ENCODE measurements at regions of chr17 and their contacts with region 1.

Region 1: DNA sequence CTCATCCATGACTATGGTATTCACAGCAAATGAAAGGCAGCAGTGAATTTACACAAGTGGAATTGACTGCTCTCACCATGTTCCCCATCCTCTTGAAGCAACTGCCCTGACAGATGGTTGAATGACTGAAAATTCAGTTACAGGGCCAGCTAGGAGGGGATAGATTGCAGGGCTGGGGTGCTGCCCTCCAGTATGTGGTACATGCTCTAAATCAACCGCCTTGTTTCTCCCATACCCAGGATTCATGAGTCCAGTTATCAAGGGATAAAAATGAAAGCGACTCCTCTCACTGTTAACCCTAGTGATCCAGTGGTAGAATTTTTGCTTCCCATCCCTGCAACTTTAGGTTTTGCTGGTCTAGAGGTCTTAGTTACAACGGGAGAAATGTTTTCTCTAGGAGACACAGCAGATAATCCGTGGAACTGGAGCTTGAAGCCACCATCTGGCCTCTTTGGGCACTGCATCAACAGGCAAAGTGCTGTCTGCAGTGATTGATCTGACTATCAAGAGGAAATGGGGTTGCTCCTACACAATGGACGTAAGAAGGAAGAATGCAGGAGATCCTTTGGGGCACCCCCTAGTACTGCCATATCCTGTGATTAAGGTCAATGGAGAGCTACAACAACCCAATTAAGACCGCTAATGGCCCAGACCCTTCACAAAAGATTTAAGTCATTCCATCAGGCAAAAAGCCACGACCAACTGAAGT is 32.0 kb downstream of the SCPEP1 start:
- DNase-seq: peak; percentile 50 to 74
- H3K4me3 ChIP-seq: no peak overlapping the region
- H3K27ac ChIP-seq: no peak overlapping the region
- H3K4me1 ChIP-seq: peaks cover 0 to 10% (median 3%) of the 10 kb centered on the region in 4 experiments; a peak in 4 of 7 replicates
- H3K27me3 ChIP-seq: no peaks in the 10 kb centered on the region
- CTCF ChIP-seq: peak; percentile 69 to 85 (median 70)
- EP300 ChIP-seq: no peak
- POLR2A ChIP-seq: no peak
- RAD21 ChIP-seq: peak; percentile 59 to 70

Region 2: GRCh38 chr17:56919716-56920115 is 90.2 kb before region 1 on chr17:
- CTCF ChIA-PET with region 1: no interaction called
- POLR2A ChIA-PET with region 1: no interaction called
- DNase-seq: no peak
- H3K4me3 ChIP-seq: no peak overlapping the region
- H3K27ac ChIP-seq: no peak overlapping the region
- H3K4me1 ChIP-seq: peaks cover 0 to 4% (median 1%) of the 10 kb centered on the region in 4 experiments; a peak in 5 of 7 replicates
- H3K27me3 ChIP-seq: peaks cover 0 to 11% (median 5%) of the 10 kb centered on the region in 4 experiments; a peak in 6 of 7 replicates
- CTCF ChIP-seq: no peak
- EP300 ChIP-seq: no peak
- POLR2A ChIP-seq: no peak
- RAD21 ChIP-seq: no peak

Region 3: DNA sequence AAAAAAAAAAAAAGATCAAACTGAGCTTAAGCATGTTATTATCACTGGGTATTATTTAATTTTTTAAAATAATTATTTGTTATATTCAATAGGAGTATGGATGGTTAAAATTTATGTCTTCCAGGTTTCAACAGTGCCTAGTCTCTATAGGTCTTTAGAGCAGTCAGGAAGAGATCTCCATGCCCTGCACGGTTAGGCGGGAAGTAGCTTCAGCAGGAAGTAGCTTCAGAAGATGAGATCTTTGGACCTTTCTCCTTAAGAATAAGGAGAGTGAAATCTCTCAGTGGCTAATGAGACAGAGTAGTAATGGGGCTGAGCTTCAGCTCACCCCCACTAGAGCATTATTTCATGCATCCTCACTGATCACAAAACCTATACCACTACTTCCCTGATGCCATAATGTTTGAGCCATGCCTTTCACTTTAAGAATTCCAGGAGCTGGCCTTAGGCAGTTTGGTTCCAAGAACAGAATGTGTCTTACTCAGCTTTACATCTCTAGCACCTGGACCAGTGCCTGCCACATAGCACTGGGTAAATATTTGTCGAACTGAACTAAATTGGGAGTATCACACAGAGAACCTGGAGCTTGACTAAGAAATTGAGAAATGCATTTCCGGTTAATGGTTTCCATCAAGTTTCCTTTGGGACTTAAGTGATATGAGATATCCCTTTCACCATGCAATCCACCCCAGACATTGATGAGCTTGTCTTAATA is 11.5 kb after region 1 on chr17:
- CTCF ChIA-PET with region 1: interaction called, 28 read pairs
- POLR2A ChIA-PET with region 1: interaction called, 4 read pairs
- DNase-seq: no peak
- H3K4me3 ChIP-seq: no peak overlapping the region
- H3K27ac ChIP-seq: no peak overlapping the region
- H3K4me1 ChIP-seq: peaks cover 8 to 16% (median 13%) of the 10 kb centered on the region in 4 experiments
- H3K27me3 ChIP-seq: no peaks in the 10 kb centered on the region
- CTCF ChIP-seq: no peak
- EP300 ChIP-seq: no peak
- POLR2A ChIP-seq: no peak
- RAD21 ChIP-seq: no peak

Region 4: GRCh38 chr17:57033295-57033694 is 23.4 kb after region 1 on chr17:
- CTCF ChIA-PET with region 1: interaction called, 16 read pairs
- POLR2A ChIA-PET with region 1: interaction called, 3 read pairs
- DNase-seq: no peak
- H3K4me3 ChIP-seq: no peak overlapping the region
- H3K27ac ChIP-seq: no peak overlapping the region
- H3K4me1 ChIP-seq: peaks cover 0 to 5% (median 2%) of the 10 kb centered on the region in 4 experiments; a peak in 3 of 7 replicates
- H3K27me3 ChIP-seq: no peaks in the 10 kb centered on the region
- CTCF ChIP-seq: no peak
- EP300 ChIP-seq: no peak
- POLR2A ChIP-seq: no peak
- RAD21 ChIP-seq: no peak

Region 5: GRCh38 chr17:57084802-57085447 is 75.0 kb after region 1 on chr17 and contains the start of gene AKAP1:
- CTCF ChIA-PET with region 1: interaction called, 10 read pairs
- POLR2A ChIA-PET with region 1: interaction called, 3 read pairs
- DNase-seq: peak; percentile 80 to 95
- H3K4me3 ChIP-seq: peak within 1 kb of the TSS; percentile 68 to 86 (median 84)
- H3K27ac ChIP-seq: peak within 1 kb of the TSS; percentile 92
- H3K4me1 ChIP-seq: peaks cover 5 to 21% (median 15%) of the 10 kb centered on the region in 4 experiments; a peak in 6 of 7 replicates
- H3K27me3 ChIP-seq: no peaks in the 10 kb centered on the region; a peak in 1 of 7 replicates
- CTCF ChIP-seq: peak; percentile 38 to 51 (median 43)
- EP300 ChIP-seq: no peak
- POLR2A ChIP-seq: peak; percentile 33 to 83
- RAD21 ChIP-seq: peak; percentile 31 to 53; a peak in 3 of 4 replicates
- total RNA-seq, gene AKAP1: 110 and 120 TPM in 2 replicates

Region 6: GRCh38 chr17:57114085-57114673 is 104.3 kb after region 1 on chr17:
- CTCF ChIA-PET with region 1: interaction called, 112 read pairs
- POLR2A ChIA-PET with region 1: interaction called, 3 read pairs
- DNase-seq: peak; percentile 15 to 96
- H3K4me3 ChIP-seq: no peak overlapping the region
- H3K27ac ChIP-seq: no peak overlapping the region
- H3K4me1 ChIP-seq: peaks cover 0 to 10% (median 8%) of the 10 kb centered on the region in 4 experiments; a peak in 5 of 7 replicates
- H3K27me3 ChIP-seq: no peaks in the 10 kb centered on the region
- CTCF ChIP-seq: peak; percentile 87 to 96 (median 94)
- EP300 ChIP-seq: no peak
- POLR2A ChIP-seq: no peak
- RAD21 ChIP-seq: peak; percentile 84 to 90